PC-3 (cell line): ENCODE measurements at regions of chr3 and their contacts with region 1.

Region 1: GRCh38 chr3:154852475-154852874 is 227.6 kb upstream of the MME start:
- DNase-seq: peak; percentile 57
- ATAC-seq: peak; percentile 86
- H3K4me3 ChIP-seq: no peak overlapping the region
- H3K27ac ChIP-seq: peak overlapping the region; percentile 7
- H3K4me1 ChIP-seq: peaks cover 12% of the 10 kb centered on the region
- H3K27me3 ChIP-seq: no peaks in the 10 kb centered on the region
- CTCF ChIP-seq: no peak

Region 2: GRCh38 chr3:154829929-154830328 is 22.5 kb before region 1 on chr3:
- CTCF ChIA-PET with region 1: no interaction called
- POLR2A ChIA-PET with region 1: no interaction called
- intact Hi-C with region 1: no loop called
- DNase-seq: no peak
- ATAC-seq: no peak
- H3K4me3 ChIP-seq: no peak overlapping the region
- H3K27ac ChIP-seq: no peak overlapping the region
- H3K4me1 ChIP-seq: no peaks in the 10 kb centered on the region
- H3K27me3 ChIP-seq: no peaks in the 10 kb centered on the region
- CTCF ChIP-seq: no peak

Region 3: GRCh38 chr3:154886437-154886836 is 34.0 kb after region 1 on chr3:
- CTCF ChIA-PET with region 1: no interaction called
- POLR2A ChIA-PET with region 1: no interaction called
- intact Hi-C with region 1: loop called (anchors 2 kb)
- DNase-seq: peak; percentile 85
- ATAC-seq: peak; percentile 99
- H3K4me3 ChIP-seq: peak overlapping the region; percentile 8; the same call in 1 of the 2 replicates
- H3K27ac ChIP-seq: peak overlapping the region; percentile 71
- H3K4me1 ChIP-seq: peaks cover 16% of the 10 kb centered on the region
- H3K27me3 ChIP-seq: no peaks in the 10 kb centered on the region
- CTCF ChIP-seq: no peak

Region 4: DNA sequence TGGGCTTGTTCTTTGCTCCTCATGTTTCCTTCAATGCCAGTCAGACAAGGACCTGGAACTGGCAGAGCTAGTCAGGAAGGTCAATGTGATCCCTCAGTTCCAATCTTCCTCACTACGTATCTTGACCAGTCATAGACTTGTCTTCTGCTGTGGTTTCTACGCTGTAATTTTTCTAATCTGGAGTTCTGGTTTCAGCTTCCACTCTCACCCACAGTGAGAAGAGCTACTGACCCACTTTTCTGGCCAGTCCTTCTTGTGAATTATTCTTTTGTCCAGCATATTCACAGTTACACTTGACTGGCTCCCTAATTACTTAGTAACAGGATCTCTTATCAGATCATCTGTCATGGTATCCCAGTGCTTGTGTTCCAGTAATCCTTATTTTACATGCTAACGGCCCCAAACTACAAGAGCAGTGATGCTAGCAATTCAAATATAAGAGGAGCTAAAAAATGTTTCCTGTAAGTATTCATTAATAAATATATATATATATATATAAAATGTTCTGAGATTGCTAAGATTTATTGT is 155.3 kb after region 1 on chr3:
- CTCF ChIA-PET with region 1: no interaction called
- POLR2A ChIA-PET with region 1: no interaction called
- intact Hi-C with region 1: no loop called
- DNase-seq: no peak
- ATAC-seq: no peak
- H3K4me3 ChIP-seq: no peak overlapping the region
- H3K27ac ChIP-seq: no peak overlapping the region
- H3K4me1 ChIP-seq: no peaks in the 10 kb centered on the region
- H3K27me3 ChIP-seq: peaks cover 2% of the 10 kb centered on the region; the same call in 1 of the 2 replicates
- CTCF ChIP-seq: no peak

Region 5: DNA sequence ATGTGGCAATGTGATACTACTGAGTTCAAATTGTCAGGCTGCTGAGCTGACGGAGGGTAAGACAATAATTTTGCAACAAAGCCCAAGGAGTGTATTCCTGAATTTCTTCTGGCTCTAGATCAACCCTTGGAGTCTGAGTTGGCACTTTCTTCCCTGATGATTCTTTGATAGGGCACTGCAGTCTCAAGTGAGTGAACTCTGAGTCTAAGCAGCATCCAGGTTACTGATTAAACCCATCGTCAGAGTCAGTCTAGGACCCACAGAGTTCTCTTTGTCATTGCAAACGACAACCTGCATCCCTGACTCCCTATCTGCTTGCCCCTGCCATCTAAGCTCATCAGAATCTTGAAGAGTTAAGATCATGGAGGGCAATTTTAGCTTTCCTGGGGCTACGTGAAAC is 286.2 kb after region 1 on chr3:
- CTCF ChIA-PET with region 1: no interaction called
- POLR2A ChIA-PET with region 1: no interaction called
- intact Hi-C with region 1: no loop called
- DNase-seq: no peak
- ATAC-seq: no peak
- H3K4me3 ChIP-seq: no peak overlapping the region
- H3K27ac ChIP-seq: no peak overlapping the region
- H3K4me1 ChIP-seq: no peaks in the 10 kb centered on the region
- H3K27me3 ChIP-seq: no peaks in the 10 kb centered on the region
- CTCF ChIP-seq: no peak

Region 6: DNA sequence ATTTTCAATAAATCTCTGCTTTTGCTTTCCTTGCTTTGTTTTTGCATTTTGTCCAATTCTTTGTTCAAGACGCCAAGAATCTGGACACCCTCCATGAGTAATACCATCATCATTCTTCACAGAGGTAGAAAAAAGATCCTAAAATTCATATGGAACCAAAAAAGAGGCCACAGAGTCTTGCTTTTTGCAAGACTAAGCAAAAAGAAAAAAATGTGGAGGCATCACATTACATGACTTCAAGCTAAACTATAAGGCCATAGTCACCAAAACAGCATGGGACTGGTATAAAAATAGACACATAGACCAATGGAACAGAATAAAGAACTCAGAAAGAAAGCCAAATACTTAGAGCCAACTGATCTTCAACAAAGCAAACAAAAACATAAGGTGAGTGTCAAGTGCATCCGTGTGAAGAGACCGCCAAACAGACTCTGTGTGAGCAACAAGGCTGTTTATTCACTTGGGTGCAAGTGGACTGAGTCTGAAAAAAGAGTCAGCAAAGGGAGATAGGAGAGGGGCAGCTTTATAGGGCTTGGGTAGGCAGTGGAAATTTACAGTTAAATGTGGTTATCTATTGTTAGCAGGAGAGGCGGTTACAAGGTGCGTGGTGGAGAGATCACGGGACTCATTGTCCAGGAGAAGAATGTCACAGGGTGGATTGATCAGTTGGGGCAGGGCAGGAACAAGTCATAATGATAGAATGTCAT is 430.1 kb after region 1 on chr3:
- CTCF ChIA-PET with region 1: no interaction called
- POLR2A ChIA-PET with region 1: no interaction called
- intact Hi-C with region 1: no loop called
- DNase-seq: peak; percentile 34
- ATAC-seq: no peak
- H3K4me3 ChIP-seq: no peak overlapping the region
- H3K27ac ChIP-seq: no peak overlapping the region
- H3K4me1 ChIP-seq: peaks cover 7% of the 10 kb centered on the region; the same call in 1 of the 2 replicates
- H3K27me3 ChIP-seq: no peaks in the 10 kb centered on the region
- CTCF ChIP-seq: no peak